ENCODE measurements at regions of chr16 and their contacts with region 1.

Region 1: DNA sequence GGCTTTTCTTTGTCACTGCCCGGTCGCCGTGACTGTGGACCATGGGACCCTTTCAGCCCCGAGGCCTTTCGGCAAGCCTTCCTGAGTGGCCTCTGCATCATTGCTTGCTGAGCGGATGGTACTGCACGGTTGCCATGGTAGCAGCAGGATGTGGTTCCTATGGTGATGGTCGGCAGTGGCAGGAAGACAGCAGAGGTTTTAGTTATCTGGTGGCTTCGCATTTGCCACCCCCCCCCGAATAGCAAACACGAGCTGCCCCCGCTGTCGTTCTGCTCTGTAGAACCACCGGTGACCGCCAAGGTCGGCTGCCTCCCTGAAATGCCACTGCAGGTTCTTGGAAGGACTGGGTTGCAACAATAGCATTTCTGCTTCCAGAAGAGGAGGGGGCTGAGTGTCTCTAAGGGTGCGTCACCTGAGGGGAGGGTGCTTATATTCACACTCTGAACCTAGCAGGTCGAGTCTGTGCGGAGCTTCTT is 76.6 kb downstream of the CMIP start:
- DNase-seq: peak; percentile 81
- H3K4me3 Mint-ChIP-seq: no peak overlapping the region
- H3K27ac Mint-ChIP-seq: peak overlapping the region; percentile 54
- H3K4me1 Mint-ChIP-seq: peaks cover 55% of the 10 kb centered on the region
- H3K27me3 Mint-ChIP-seq: no peaks in the 10 kb centered on the region

Region 2: GRCh38 chr16:81444448-81445121 is 76.6 kb before region 1 on chr16 and contains the start of gene CMIP:
- intact Hi-C with region 1: loop called (anchors 10 kb)
- DNase-seq: peak; percentile 77
- H3K4me3 Mint-ChIP-seq: peak within 1 kb of the TSS; percentile 90
- H3K27ac Mint-ChIP-seq: peak within 1 kb of the TSS; percentile 83
- H3K4me1 Mint-ChIP-seq: peaks cover 38% of the 10 kb centered on the region
- H3K27me3 Mint-ChIP-seq: peaks cover 29% of the 10 kb centered on the region
- total RNA-seq, gene CMIP: 68.0 and 76.9 TPM in 2 replicates

Region 3: GRCh38 chr16:81481207-81481821 is 39.9 kb before region 1 on chr16:
- intact Hi-C with region 1: loop called (anchors 5 kb)
- DNase-seq: no peak
- H3K4me3 Mint-ChIP-seq: no peak overlapping the region
- H3K27ac Mint-ChIP-seq: peak overlapping the region; percentile 68
- H3K4me1 Mint-ChIP-seq: peaks cover 65% of the 10 kb centered on the region
- H3K27me3 Mint-ChIP-seq: no peaks in the 10 kb centered on the region

Measured in activated T-helper 2 cell treated with anti-CD3 and anti-CD28 coated beads, Interferon-gamma antibody, Interleukin-2, Interleukin-4, amounts not matched to agents 10 μg/mL and 5 μg/mL and 100 μg/mL, durations not matched to agents 14 hours and 24 hours and 36 hours (primary cell).